Common myeloid progenitor, CD34-positive (primary cell): ENCODE measurements at regions of chr17 and their contacts with region 1.

Region 1: GRCh38 chr17:17568749-17569195 is 22.7 kb downstream of the PEMT start:
- DNase-seq: peak; percentile 43 to 52 (median 46)
- H3K4me3 ChIP-seq: no peak overlapping the region
- H3K27ac ChIP-seq: no peak overlapping the region
- H3K4me1 ChIP-seq: no peaks in the 10 kb centered on the region
- H3K27me3 ChIP-seq: no peaks in the 10 kb centered on the region

Region 2: GRCh38 chr17:17511881-17512858 is 56.6 kb before region 1 on chr17:
- CTCF ChIA-PET with region 1: interaction called, 16 read pairs
- POLR2A ChIA-PET with region 1: no interaction called
- DNase-seq: peak; percentile 67 to 95 (median 91)
- H3K4me3 ChIP-seq: no peak overlapping the region
- H3K27ac ChIP-seq: no peak overlapping the region
- H3K4me1 ChIP-seq: peaks cover 0 to 42% (median 34%) of the 10 kb centered on the region in 4 experiments
- H3K27me3 ChIP-seq: no peaks in the 10 kb centered on the region